OCI-LY7 (cell line): ENCODE measurements at regions of chr6 and their contacts with region 1.

Region 1: GRCh38 chr6:155174576-155175211 is 89.1 kb upstream of the CLDN20 start:
- DNase-seq: peak; percentile 92
- H3K4me3 ChIP-seq: no peak overlapping the region
- H3K27ac ChIP-seq: peak overlapping the region; percentile 84
- H3K4me1 ChIP-seq: peaks cover 55% of the 10 kb centered on the region
- CTCF ChIP-seq: peak; percentile 89

Region 2: DNA sequence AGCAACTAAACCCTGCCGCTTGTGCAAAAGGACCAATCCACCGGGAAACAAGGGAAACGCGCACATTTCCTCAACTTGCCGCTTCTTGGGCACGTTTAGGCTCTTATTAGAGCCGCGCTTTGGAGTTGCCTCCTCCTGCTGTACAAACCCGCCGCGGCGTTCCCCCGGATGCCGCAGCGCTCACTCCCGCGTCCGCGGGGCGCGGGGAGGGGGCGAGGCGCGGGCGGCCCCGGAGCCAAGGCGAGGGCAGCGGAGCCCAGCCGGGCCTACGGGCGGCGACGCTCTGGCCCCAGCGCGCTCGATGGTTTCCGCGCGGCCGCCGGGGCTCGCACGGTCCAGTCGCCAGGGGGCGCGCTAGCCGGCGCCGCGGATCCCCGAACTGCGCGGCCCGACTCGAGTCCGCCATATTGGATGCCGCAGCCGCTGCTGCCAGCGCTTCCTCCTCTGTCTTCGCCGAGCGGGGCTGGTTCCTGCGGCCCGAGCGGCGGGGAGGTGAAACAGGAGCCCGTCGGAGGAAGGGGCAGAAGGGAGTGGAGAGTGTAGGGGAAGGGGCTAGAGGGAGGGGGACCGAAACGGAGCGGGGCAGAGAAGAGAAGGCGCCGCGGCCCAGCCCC is 441.6 kb before region 1 on chr6 and contains the start of gene SCAF8:
- CTCF ChIA-PET with region 1: no interaction called
- POLR2A ChIA-PET with region 1: no interaction called
- intact Hi-C with region 1: loop called (anchors 5 kb)
- DNase-seq: peak; percentile 90
- H3K4me3 ChIP-seq: peak within 1 kb of the TSS; percentile 98
- H3K27ac ChIP-seq: peak within 1 kb of the TSS; percentile 77
- H3K4me1 ChIP-seq: peaks cover 39% of the 10 kb centered on the region
- CTCF ChIP-seq: peak; percentile 77
- total RNA-seq, gene SCAF8: 23.9 and 25.8 TPM in 2 replicates

Region 3: GRCh38 chr6:154868143-154868594 is 306.5 kb before region 1 on chr6:
- CTCF ChIA-PET with region 1: interaction called, 3 read pairs
- POLR2A ChIA-PET with region 1: no interaction called
- intact Hi-C with region 1: loop called (anchors 2 kb)
- DNase-seq: peak; percentile 64
- H3K4me3 ChIP-seq: no peak overlapping the region
- H3K27ac ChIP-seq: no peak overlapping the region
- H3K4me1 ChIP-seq: no peaks in the 10 kb centered on the region
- CTCF ChIP-seq: peak; percentile 95

Region 4: GRCh38 chr6:154928325-154928922 is 246.3 kb before region 1 on chr6:
- CTCF ChIA-PET with region 1: interaction called, 4 read pairs
- POLR2A ChIA-PET with region 1: interaction called, 3 read pairs
- intact Hi-C with region 1: loop called (anchors 1 kb)
- DNase-seq: peak; percentile 80
- H3K4me3 ChIP-seq: no peak overlapping the region
- H3K27ac ChIP-seq: no peak overlapping the region
- H3K4me1 ChIP-seq: peaks cover 22% of the 10 kb centered on the region
- CTCF ChIP-seq: peak; percentile 98

Region 5: GRCh38 chr6:155194399-155194798 is 19.7 kb after region 1 on chr6:
- CTCF ChIA-PET with region 1: no interaction called
- POLR2A ChIA-PET with region 1: no interaction called
- intact Hi-C with region 1: no loop called
- DNase-seq: no peak
- H3K4me3 ChIP-seq: no peak overlapping the region
- H3K27ac ChIP-seq: no peak overlapping the region
- H3K4me1 ChIP-seq: no peaks in the 10 kb centered on the region
- CTCF ChIP-seq: no peak

Region 6: DNA sequence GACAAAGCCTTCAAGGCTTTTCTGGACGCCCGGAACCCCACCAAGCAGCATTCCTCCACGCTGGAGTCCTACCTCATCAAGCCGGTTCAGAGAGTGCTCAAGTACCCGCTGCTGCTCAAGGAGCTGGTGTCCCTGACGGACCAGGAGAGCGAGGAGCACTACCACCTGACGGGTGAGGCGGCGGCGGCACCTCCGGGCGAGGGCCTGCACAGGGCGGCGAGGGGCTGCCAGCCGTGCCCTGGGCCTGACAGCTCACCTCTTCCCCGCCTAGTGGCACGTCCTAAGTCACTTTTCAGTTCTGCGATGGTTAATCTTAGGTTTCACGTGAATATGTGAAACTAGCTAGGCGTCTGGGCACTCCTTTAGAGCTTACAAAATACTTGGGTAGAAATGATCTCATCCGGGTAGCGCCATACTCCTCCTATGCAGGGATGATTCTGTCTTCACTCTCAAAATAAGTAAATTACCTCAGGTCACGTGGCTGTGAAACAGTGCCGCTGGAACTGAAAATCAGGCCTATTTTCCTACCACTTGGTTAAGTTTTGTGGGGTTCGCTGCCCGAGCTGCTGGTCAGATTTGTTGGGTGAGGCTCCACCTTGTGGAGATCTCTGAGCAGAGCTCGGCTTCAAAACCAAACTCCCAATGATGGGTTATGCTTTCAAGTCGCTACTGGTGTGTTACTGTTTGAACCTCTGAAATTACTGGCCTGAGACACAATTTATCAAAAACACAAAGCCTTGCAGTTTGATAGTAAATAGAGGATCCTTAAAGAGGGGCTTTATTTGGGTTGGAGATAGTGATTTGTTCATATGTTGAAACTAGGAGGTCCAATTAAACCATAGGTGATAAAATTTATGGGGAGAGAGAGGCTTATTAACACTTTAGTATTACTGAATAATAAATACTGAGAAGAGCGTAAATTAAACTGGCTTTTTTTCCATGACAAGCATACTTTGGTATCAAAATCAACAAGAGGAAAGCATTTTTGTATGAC is 73.6 kb after region 1 on chr6:
- CTCF ChIA-PET with region 1: no interaction called
- POLR2A ChIA-PET with region 1: interaction called, 5 read pairs
- intact Hi-C with region 1: loop called (anchors 1 kb)
- DNase-seq: peak; percentile 63
- H3K4me3 ChIP-seq: no peak overlapping the region
- H3K27ac ChIP-seq: no peak overlapping the region
- H3K4me1 ChIP-seq: no peaks in the 10 kb centered on the region
- CTCF ChIP-seq: peak; percentile 89

Region 7: GRCh38 chr6:155530219-155530834 is 355.6 kb after region 1 on chr6:
- CTCF ChIA-PET with region 1: no interaction called
- POLR2A ChIA-PET with region 1: interaction called, 3 read pairs
- intact Hi-C with region 1: loop called (anchors 1 kb)
- DNase-seq: peak; percentile 66
- H3K4me3 ChIP-seq: no peak overlapping the region
- H3K27ac ChIP-seq: no peak overlapping the region
- H3K4me1 ChIP-seq: peaks cover 10% of the 10 kb centered on the region
- CTCF ChIP-seq: peak; percentile 97